ENCODE measurements at regions of chr11 and their contacts with region 1.

Region 1: GRCh38 chr11:1917671-1918516 is 1.6 kb upstream of the TNNT3 start:
- DNase-seq: peak; percentile 31
- ATAC-seq: peak; percentile 40
- H3K4me3 ChIP-seq: no peak overlapping the region
- H3K4me3 Mint-ChIP-seq: no peak overlapping the region
- H3K27ac ChIP-seq: no peak overlapping the region
- H3K27ac Mint-ChIP-seq: no peak overlapping the region
- H3K4me1 ChIP-seq: peaks cover 0 to 5% of the 10 kb centered on the region in 2 donors
- H3K4me1 Mint-ChIP-seq: peaks cover 19% of the 10 kb centered on the region
- H3K27me3 ChIP-seq: peaks cover 0 to 13% (median 6%) of the 10 kb centered on the region in 4 experiments
- H3K27me3 Mint-ChIP-seq: peaks cover 21% of the 10 kb centered on the region
- CTCF ChIP-seq: peak; percentile 48

Region 2: DNA sequence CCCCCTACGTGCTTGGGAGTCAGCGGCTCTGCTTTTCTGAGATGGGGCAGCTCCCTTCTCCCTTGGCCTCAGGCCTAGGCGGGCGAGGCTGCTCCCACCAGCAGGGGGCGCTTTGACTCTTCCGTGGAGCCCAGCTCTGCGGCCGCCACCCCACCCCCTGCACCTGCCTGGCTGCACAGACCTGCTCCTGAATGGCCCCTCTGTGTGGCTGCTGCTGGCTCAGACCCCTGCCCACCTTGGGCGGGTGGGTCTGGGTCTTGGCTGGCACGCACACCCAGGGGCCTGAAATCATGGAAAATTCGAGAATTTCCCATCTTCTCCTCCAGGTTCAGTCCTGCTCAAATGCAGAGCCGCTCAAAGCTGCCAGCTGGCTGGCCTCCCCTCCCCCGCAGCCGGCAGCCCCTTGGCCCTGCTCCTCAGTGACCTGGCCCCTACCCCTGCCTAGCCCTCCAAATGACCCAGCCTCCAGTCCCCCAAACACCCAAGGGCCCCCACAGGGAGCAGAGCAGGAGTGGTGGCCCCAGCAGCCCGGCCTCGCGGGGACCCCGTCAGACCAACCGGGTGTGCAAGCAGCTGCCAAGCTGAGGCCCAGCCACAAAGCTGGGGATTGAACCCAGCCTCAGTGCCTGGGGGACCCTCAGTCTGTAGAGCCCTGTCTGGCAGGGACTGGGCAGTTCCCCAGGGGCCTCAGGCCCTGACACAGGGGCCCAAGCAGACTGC is 35.2 kb before region 1 on chr11:
- CTCF ChIA-PET with region 1: interaction called, 9 read pairs
- POLR2A ChIA-PET with region 1: interaction called, 4 read pairs
- intact Hi-C with region 1: loop called (anchors 5 kb)
- DNase-seq: peak; percentile 86
- ATAC-seq: peak; percentile 74
- H3K4me3 ChIP-seq: no peak overlapping the region
- H3K4me3 Mint-ChIP-seq: peak overlapping the region; percentile 34
- H3K27ac ChIP-seq: no peak overlapping the region
- H3K27ac Mint-ChIP-seq: peak overlapping the region; percentile 75
- H3K4me1 ChIP-seq: peaks cover 32 to 46% of the 10 kb centered on the region in 2 donors
- H3K4me1 Mint-ChIP-seq: peaks cover 38% of the 10 kb centered on the region
- H3K27me3 ChIP-seq: no peaks in the 10 kb centered on the region
- H3K27me3 Mint-ChIP-seq: no peaks in the 10 kb centered on the region
- CTCF ChIP-seq: peak; percentile 87

Region 3: DNA sequence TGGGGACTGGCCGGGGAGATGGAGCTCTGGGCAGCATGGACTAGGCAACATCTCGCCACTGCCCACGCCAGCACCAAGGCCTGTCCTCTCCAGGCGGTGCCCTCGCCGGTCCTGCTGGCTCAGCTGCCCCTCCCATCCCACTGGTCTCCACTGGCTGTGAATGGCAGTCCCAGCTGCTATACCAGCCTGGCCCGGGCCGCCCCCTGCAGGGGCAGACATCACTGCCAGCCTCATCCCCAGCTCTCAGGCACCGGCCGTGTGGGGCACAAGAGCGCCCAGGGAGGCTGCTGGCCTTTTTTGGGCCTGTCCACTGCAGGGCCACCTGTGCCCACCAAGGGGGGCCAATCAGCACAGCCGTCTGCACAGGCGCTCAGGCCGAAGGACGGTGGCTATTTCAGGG is 109.8 kb after region 1 on chr11:
- CTCF ChIA-PET with region 1: no interaction called
- POLR2A ChIA-PET with region 1: no interaction called
- intact Hi-C with region 1: no loop called
- DNase-seq: no peak
- ATAC-seq: no peak
- H3K4me3 ChIP-seq: no peak overlapping the region
- H3K4me3 Mint-ChIP-seq: no peak overlapping the region
- H3K27ac ChIP-seq: no peak overlapping the region
- H3K27ac Mint-ChIP-seq: no peak overlapping the region
- H3K4me1 ChIP-seq: no peaks in the 10 kb centered on the region
- H3K4me1 Mint-ChIP-seq: no peaks in the 10 kb centered on the region
- H3K27me3 ChIP-seq: no peaks in the 10 kb centered on the region
- H3K27me3 Mint-ChIP-seq: no peaks in the 10 kb centered on the region
- CTCF ChIP-seq: no peak

Region 4: GRCh38 chr11:2092956-2093412 is 175.1 kb after region 1 on chr11:
- CTCF ChIA-PET with region 1: no interaction called
- POLR2A ChIA-PET with region 1: no interaction called
- intact Hi-C with region 1: no loop called
- DNase-seq: no peak
- ATAC-seq: no peak
- H3K4me3 ChIP-seq: no peak overlapping the region
- H3K4me3 Mint-ChIP-seq: no peak overlapping the region
- H3K27ac ChIP-seq: no peak overlapping the region
- H3K27ac Mint-ChIP-seq: no peak overlapping the region
- H3K4me1 ChIP-seq: peaks cover 0 to 2% of the 10 kb centered on the region in 2 donors
- H3K4me1 Mint-ChIP-seq: no peaks in the 10 kb centered on the region
- H3K27me3 ChIP-seq: peaks cover 0 to 7% (median 1%) of the 10 kb centered on the region in 4 experiments
- H3K27me3 Mint-ChIP-seq: peaks cover 12% of the 10 kb centered on the region
- CTCF ChIP-seq: no peak

Measured in B cell (primary cell).